GM23248 (cell line): ENCODE measurements at regions of chr15 and their contacts with region 1.

Region 1: DNA sequence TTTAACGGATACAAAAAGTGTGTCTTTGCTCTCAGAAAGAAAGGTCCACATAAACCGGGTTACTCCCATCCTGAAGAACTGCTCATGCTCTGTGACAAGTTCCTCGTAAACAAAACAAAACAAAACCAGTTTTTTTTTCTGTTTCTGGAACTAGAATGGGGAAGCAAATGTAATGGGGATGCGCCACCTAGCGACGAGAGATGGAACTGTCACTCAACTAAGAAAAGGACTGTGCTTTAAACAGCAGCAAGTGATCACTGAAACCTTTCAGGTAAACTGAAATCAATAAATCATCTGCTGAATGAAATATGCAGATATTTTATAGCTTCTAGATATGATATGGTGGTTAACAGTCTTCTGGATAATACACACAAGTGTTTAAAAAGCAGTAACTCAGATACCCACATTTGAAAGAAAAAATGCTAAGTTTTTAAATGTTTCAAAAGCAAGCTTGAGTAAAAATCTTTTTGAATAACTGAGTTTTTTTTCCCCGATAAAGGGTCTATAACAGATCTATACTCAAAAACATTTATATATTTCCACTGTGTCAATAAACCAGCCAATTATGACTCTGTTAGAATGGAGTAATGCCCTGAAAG is 10.9 kb downstream of the TM2D3 start:
- DNase-seq: peak; percentile 80
- H3K4me3 ChIP-seq: no peak overlapping the region
- H3K27ac ChIP-seq: peak overlapping the region; percentile 33
- H3K4me1 ChIP-seq: peaks cover 6% of the 10 kb centered on the region; the same call in 1 of the 2 replicates
- H3K27me3 ChIP-seq: no peaks in the 10 kb centered on the region

Region 2: DNA sequence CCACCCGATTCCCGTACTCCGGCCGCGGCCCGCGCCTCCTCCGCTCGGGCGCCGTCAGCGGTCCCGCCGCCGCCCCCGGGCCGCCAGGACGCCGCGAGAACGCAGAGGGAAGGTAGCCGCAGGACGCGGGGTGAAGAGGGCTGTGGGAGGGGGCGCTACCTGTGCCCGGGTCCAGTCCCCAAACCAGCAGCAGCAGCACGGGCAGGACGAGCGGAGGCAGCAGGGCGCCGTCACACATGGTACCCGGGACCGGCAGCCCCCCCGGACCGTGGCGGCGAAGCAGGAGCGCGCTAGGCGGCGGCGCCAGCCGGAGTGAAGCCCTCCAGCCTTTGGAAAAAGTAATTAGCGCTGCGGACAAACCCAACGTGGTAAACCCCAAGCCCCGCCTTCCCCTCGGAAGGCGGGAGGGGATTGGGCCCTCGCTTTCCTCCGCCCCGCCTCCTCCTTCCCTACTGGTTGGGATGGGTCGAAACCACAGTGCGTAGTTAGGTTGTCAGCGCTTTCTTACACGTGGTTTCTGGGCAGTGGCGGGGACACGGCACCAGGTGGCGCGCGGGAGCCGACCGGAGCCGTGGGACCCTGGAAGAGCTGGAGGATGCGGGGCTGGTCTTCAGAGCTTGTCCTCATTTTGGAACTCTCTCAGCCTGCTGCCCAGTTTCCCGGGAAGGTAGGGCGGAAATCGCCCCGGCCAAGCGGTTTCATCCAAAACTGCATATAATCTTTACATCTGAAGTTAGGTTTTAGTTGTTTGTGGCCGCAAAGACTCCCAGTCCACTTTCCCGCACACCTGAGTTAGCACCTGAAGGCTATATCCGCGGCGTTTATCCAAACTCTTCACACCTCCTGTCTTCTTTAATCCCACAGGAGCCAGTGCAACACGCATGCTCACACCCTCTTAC is 1299.4 kb before region 1 on chr15 and contains the start of gene ADAMTS17:
- in situ Hi-C with region 1: no loop called
- DNase-seq: peak; percentile 91
- H3K4me3 ChIP-seq: peak within 1 kb of the TSS; percentile 62
- H3K27ac ChIP-seq: no peak within 1 kb of the TSS
- H3K4me1 ChIP-seq: no peaks in the 10 kb centered on the region
- H3K27me3 ChIP-seq: peaks cover 9% of the 10 kb centered on the region
- total RNA-seq, gene ADAMTS17: not detected in 2 replicates

Region 3: GRCh38 chr15:101294731-101295606 is 346.3 kb before region 1 on chr15 and contains the start of gene SNRPA1:
- in situ Hi-C with region 1: loop called (anchors 5 kb)
- DNase-seq: peak; percentile 99
- H3K4me3 ChIP-seq: peak within 1 kb of the TSS; percentile 92
- H3K27ac ChIP-seq: peak within 1 kb of the TSS; percentile 85
- H3K4me1 ChIP-seq: peaks cover 31% of the 10 kb centered on the region
- H3K27me3 ChIP-seq: no peaks in the 10 kb centered on the region
- total RNA-seq, gene SNRPA1: 29.3 and 35.2 TPM in 2 replicates